GM13976 (cell line): ENCODE measurements at regions of chr1 and their contacts with region 1.

Region 1: GRCh38 chr1:100132566-100133477 is at the starts of genes SASS6 and TRMT13:
- DNase-seq: peak; percentile 88
- CTCF ChIP-seq: no peak

Region 2: DNA sequence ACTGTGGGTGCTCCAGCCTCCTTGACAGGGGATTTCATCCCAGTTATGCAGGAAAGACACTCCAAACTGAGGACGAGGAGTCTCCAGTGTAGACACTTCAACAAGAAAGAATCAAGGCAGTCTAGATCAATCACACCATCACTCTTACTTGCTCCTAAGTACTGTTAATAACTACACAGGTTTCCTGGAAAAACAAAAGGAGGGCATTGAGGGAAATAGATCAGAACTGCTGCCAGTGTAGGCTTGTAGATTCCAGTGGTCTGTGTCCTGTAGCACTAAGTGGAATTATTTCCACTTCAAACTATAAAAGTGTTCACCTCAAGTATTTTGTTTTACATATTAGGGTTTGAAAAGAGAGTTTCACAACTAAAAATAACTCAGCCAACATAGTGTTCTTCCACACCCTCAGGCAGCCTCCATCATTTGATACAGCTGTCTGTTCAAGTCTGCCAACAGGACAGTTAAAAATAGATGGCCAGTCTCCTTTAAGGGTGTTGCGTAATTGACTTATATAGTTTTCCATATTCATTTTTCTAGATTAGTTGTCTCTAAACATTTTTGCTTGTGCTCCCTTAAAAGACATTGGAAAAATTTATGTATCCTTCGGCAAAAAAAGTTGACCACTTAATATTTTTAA is 314.6 kb before region 1 on chr1:
- in situ Hi-C with region 1: loop called (anchors 10 kb)
- DNase-seq: no peak
- CTCF ChIP-seq: no peak